Sciatic nerve (tissue), 2 donors: ENCODE measurements at regions of chr17 and their contacts with region 1.

Region 1: DNA sequence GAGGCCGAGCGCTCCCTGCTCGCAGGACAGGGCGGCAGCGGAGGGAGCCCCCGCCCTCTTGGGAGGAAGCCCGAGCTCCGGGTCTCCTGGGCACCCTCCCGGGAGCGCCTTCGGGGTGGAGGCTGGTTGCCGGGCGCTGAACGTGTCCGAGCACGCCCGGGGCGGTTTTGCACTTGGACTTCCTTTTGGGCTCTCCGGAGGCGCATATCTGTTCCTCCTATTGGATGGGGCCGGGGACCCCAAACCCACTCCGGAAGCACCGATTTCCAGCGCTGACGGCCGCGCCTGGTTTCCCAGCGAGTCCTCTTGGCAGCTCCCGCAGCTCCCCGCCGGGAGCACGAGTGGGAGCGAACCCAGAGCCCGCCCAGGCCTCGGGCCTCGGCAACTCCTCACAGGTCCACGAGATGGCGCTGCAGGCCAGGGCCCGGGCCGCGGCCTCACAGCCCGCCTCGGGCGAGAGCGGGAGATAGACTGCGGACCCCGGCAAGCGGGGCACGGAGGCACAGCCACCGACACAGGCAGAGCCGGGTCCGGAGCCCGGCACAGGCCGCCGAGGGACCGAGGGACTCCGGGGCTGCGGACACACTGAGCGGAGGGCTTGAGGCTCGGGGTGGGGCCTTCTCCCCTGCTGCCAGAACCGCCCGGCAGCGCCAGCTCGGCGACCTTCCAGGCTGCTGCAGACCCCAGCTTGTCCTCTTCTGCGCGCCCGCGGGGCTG is 12.7 kb downstream of the TBX2 start:
- DNase-seq: peak; percentile 93
- ATAC-seq: peak; percentile 81

Region 2: DNA sequence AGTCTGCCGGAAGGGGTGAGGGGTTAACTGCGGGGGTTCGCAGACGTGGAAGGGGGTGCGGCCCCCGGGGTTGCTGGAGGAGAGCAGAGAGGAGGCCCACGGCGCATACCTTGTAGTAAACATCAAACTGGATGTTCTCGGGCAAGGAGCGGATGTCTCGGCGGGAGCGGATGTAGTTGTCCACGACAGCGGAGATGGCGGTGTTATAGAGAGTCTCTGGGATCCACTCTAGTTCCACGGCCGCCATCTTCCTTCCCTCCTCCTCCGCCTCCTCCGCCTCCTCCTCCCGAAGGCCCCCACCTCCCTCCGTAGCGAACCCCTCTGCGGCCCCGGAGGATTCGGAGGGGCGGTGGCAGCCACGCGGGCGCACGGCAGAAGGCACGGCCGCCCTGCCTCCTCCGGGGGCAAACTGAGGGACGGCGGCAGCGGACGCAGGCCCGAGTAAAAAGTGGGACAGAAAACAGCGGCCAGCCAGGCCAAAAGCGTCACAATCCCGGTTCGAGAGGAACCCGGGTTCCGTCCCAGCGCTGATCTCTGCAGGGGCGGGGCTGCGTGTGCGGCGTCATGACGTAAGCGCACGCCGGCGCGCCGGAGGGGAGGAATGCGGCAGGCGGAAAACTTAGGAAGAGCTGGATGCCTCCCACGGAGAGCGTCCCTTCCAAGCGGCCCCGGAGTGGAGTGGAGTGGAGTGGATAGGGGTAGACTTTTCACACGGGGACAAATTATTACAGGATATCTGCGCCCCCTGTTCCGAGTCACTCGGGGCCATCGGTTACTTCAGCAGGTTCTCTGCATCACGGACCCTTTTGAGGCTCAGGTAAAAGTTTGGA is 886.4 kb before region 1 on chr17 and contains the start of gene APPBP2:
- intact Hi-C with region 1: no loop called
- DNase-seq: peak; percentile 94
- ATAC-seq: peak; percentile 98
- total RNA-seq, gene APPBP2: 63.2 TPM

Region 3: DNA sequence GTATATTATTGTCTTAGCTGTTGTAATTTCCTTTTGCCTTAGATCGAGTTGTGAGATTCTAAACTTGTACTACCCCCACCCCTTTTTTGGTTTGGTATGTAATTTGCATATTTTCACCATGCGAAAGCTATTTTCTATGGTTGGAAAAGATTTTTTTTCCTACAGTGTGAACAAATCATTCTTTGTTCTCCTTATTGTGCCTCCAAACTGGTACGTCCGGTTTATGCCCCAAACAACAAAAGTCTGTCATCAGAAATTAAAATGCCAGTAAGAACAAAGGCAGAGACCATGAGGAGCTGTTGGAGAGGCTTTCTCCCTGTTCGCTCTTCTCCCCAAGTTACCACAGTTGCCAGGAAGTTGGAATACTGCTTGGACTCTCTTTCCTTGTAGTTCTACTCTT is 668.5 kb before region 1 on chr17:
- intact Hi-C with region 1: loop called (anchors 10 kb)
- DNase-seq: no peak
- ATAC-seq: no peak

Region 4: GRCh38 chr17:61383689-61384201 is 28.6 kb before region 1 on chr17:
- intact Hi-C with region 1: no loop called
- DNase-seq: peak; percentile 58
- ATAC-seq: peak; percentile 75

Region 5: GRCh38 chr17:61837175-61838051 is 425.1 kb after region 1 on chr17:
- intact Hi-C with region 1: loop called (anchors 10 kb)
- DNase-seq: peak; percentile 75
- ATAC-seq: peak; percentile 55

Region 6: GRCh38 chr17:62065598-62066468 is 653.5 kb after region 1 on chr17:
- intact Hi-C with region 1: loop called (anchors 10 kb)
- DNase-seq: peak; percentile 99
- ATAC-seq: peak; percentile 100